Colonic mucosa (tissue), 4 donors: ENCODE measurements at regions of chr12 and their contacts with region 1.

Region 1: GRCh38 chr12:100382338-100382737 is 25.5 kb downstream of the SLC17A8 start:
- DNase-seq: no peak
- H3K4me3 ChIP-seq: no peak overlapping the region
- H3K27ac ChIP-seq: no peak overlapping the region
- H3K4me1 ChIP-seq: no peaks in the 10 kb centered on the region
- H3K27me3 ChIP-seq: no peaks in the 10 kb centered on the region
- CTCF ChIP-seq: no peak

Region 2: DNA sequence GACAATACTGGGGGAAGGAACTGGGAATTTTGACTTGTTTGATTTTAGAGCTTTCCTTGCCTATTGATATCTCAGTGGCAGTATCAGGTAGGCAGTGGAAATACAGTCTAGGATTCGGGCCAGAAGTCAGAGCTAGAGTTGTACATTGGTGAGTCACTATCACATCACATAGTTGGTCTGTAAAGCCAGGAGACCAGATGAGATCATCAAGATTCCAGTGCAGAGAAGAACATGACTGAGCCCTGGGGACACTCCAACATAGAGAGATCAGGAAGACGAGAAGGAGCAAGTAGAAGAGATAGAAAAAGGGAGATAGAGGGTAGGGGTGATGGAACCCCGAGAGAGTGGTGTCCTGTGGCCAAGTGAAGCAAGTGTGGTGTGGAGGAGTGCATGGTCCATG is 44.7 kb after region 1 on chr12:
- intact Hi-C with region 1: no loop called
- DNase-seq: no peak
- H3K4me3 ChIP-seq: no peak overlapping the region
- H3K27ac ChIP-seq: no peak overlapping the region
- H3K4me1 ChIP-seq: no peaks in the 10 kb centered on the region
- H3K27me3 ChIP-seq: no peaks in the 10 kb centered on the region
- CTCF ChIP-seq: no peak

Region 3: DNA sequence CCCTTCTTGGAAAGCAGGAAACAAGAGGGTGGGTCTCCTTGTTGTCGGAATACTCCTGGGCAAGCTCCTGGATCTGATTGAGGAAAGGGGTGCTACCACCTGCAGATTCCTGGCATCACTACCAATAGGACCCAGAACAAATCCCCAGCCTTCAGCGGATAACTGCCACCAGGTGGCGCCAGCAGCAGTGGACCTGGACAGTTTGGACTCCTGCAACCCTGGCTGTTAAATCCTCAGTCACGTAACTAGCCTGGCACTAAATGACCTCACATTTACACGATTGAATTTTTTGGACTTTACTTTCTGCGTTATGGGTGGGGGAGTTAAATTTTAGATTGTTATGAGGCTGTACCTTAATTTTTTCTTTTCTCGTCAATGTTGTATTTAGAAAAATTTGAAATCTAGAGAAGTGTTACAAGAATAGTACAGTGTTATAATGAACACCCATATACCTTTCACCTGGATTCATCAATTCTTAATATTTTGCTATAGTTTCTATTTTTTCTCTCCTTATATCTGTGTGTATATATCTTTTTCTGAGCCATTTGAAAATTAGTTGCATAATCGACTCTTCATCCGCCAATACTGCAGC is 286.7 kb after region 1 on chr12:
- intact Hi-C with region 1: loop called (anchors 10 kb)
- DNase-seq: peak; percentile 82
- H3K4me3 ChIP-seq: no peak overlapping the region
- H3K27ac ChIP-seq: no peak overlapping the region
- H3K4me1 ChIP-seq: no peaks in the 10 kb centered on the region
- H3K27me3 ChIP-seq: no peaks in the 10 kb centered on the region
- CTCF ChIP-seq: peak; percentile 69